GM12878 (cell line): ENCODE measurements at regions of chr2 and their contacts with region 1.

Region 1: GRCh38 chr2:112749755-112750559 is 14.5 kb downstream of the CKAP2L start:
- DNase-seq: no peak
- ATAC-seq: peak; percentile 95
- H3K4me3 ChIP-seq: no peak overlapping the region
- H3K27ac ChIP-seq: no peak overlapping the region
- H3K4me1 ChIP-seq: no peaks in the 10 kb centered on the region
- H3K27me3 ChIP-seq: no peaks in the 10 kb centered on the region
- CTCF ChIP-seq: peak; percentile 95 to 98 (median 98); a peak in 5 of 6 replicates
- EP300 ChIP-seq: no peak
- POLR2A ChIP-seq: no peak
- RAD21 ChIP-seq: peak; percentile 98

Region 2: GRCh38 chr2:112733456-112733855 is 16.5 kb before region 1 on chr2:
- CTCF ChIA-PET with region 1: interaction called, 28 read pairs
- POLR2A ChIA-PET with region 1: interaction called, 3 read pairs
- RAD21 ChIA-PET with region 1: interaction called, 8 read pairs
- SMC1A ChIA-PET with region 1: interaction called, 25 read pairs
- in situ Hi-C with region 1: no loop called
- intact Hi-C with region 1: no loop called
- DNase-seq: no peak
- ATAC-seq: no peak
- H3K4me3 ChIP-seq: no peak overlapping the region
- H3K27ac ChIP-seq: no peak overlapping the region
- H3K4me1 ChIP-seq: peaks cover under 1% of the 10 kb centered on the region; the same call in 1 of the 2 replicates
- H3K27me3 ChIP-seq: no peaks in the 10 kb centered on the region
- CTCF ChIP-seq: no peak
- EP300 ChIP-seq: no peak
- POLR2A ChIP-seq: no peak
- RAD21 ChIP-seq: no peak

Region 3: GRCh38 chr2:112784199-112785189 is 34.5 kb after region 1 on chr2 and contains the start of gene IL1A:
- CTCF ChIA-PET with region 1: interaction called, 11 read pairs
- POLR2A ChIA-PET with region 1: interaction called, 3 read pairs
- RAD21 ChIA-PET with region 1: interaction called, 36 read pairs
- SMC1A ChIA-PET with region 1: interaction called, 13 read pairs
- in situ Hi-C with region 1: no loop called
- intact Hi-C with region 1: loop called (anchors 2 kb)
- DNase-seq: no peak
- ATAC-seq: no peak
- H3K4me3 ChIP-seq: no peak within 1 kb of the TSS
- H3K27ac ChIP-seq: peak within 1 kb of the TSS; percentile 62
- H3K4me1 ChIP-seq: peaks cover 23% of the 10 kb centered on the region
- H3K27me3 ChIP-seq: no peaks in the 10 kb centered on the region
- CTCF ChIP-seq: no peak
- EP300 ChIP-seq: no peak
- POLR2A ChIP-seq: peak; percentile 70
- RAD21 ChIP-seq: no peak
- polyA plus RNA-seq, gene IL1A: 5.7 to 8.7 TPM

Region 4: GRCh38 chr2:112811841-112812306 is 61.9 kb after region 1 on chr2:
- CTCF ChIA-PET with region 1: interaction called, 8 read pairs
- POLR2A ChIA-PET with region 1: interaction called, 5 read pairs
- RAD21 ChIA-PET with region 1: interaction called, 7 read pairs
- SMC1A ChIA-PET with region 1: interaction called, 18 read pairs
- in situ Hi-C with region 1: no loop called
- intact Hi-C with region 1: no loop called
- DNase-seq: no peak
- ATAC-seq: peak; percentile 76
- H3K4me3 ChIP-seq: no peak overlapping the region
- H3K27ac ChIP-seq: peak overlapping the region; percentile 55
- H3K4me1 ChIP-seq: peaks cover 15% of the 10 kb centered on the region
- H3K27me3 ChIP-seq: no peaks in the 10 kb centered on the region
- CTCF ChIP-seq: no peak
- EP300 ChIP-seq: no peak
- POLR2A ChIP-seq: no peak
- RAD21 ChIP-seq: 0 out of 2 replicates have a peak, but pooled peaks have one; percentile 8

Region 5: DNA sequence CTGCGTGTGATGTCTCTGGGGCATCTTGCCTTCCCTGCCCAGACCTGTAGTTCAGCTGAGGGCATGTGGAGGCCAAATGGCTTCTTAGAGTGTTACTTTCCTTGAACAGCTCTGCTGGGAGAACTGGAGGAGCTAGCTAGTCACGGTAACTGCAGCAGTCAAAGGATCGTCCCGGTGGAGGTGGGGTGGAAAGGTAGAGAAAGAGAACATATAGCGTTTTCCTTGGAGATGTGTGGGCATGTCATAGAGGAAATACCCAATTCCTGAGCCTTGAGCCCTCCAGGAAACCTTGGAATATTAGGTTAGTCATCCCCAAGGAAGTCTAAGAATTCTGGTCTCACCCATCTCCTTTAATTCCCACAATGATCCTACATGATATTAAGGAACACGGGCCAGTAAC is 127.5 kb after region 1 on chr2:
- CTCF ChIA-PET with region 1: interaction called, 496 read pairs
- POLR2A ChIA-PET with region 1: interaction called, 7 read pairs
- RAD21 ChIA-PET with region 1: interaction called, 281 read pairs
- SMC1A ChIA-PET with region 1: interaction called, 362 read pairs
- in situ Hi-C with region 1: loop called (anchors 5 kb)
- intact Hi-C with region 1: no loop called
- DNase-seq: no peak
- ATAC-seq: no peak
- H3K4me3 ChIP-seq: no peak overlapping the region
- H3K27ac ChIP-seq: no peak overlapping the region
- H3K4me1 ChIP-seq: peaks cover 28% of the 10 kb centered on the region
- H3K27me3 ChIP-seq: no peaks in the 10 kb centered on the region
- CTCF ChIP-seq: no peak
- EP300 ChIP-seq: no peak
- POLR2A ChIP-seq: no peak
- RAD21 ChIP-seq: no peak

Region 6: DNA sequence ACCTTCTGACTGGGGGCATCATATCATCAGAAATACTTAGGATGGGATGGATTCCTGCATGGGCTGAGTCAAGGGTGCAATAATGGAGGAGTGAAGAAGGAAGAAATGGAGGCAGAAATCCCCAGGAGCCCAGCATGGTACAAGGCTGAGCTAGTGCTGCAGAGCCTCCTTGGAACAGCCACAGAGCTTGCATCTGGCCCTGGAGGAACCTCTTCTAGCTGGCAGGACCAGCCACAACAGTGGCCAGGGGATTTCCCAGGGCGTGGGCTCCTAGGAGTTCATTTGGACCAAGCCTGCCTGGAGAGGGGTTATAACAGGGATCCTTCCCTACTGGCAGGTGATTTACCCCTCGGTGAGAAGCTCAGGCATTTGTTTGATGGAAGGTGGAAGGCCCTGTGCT is 156.3 kb after region 1 on chr2:
- CTCF ChIA-PET with region 1: interaction called, 11 read pairs
- POLR2A ChIA-PET with region 1: interaction called, 4 read pairs
- RAD21 ChIA-PET with region 1: interaction called, 6 read pairs
- SMC1A ChIA-PET with region 1: interaction called, 13 read pairs
- in situ Hi-C with region 1: no loop called
- intact Hi-C with region 1: no loop called
- DNase-seq: no peak
- ATAC-seq: peak; percentile 32; the same call in 1 of the 3 replicates
- H3K4me3 ChIP-seq: no peak overlapping the region
- H3K27ac ChIP-seq: no peak overlapping the region
- H3K4me1 ChIP-seq: no peaks in the 10 kb centered on the region
- H3K27me3 ChIP-seq: no peaks in the 10 kb centered on the region
- CTCF ChIP-seq: no peak
- EP300 ChIP-seq: no peak
- POLR2A ChIP-seq: no peak
- RAD21 ChIP-seq: no peak

Region 7: DNA sequence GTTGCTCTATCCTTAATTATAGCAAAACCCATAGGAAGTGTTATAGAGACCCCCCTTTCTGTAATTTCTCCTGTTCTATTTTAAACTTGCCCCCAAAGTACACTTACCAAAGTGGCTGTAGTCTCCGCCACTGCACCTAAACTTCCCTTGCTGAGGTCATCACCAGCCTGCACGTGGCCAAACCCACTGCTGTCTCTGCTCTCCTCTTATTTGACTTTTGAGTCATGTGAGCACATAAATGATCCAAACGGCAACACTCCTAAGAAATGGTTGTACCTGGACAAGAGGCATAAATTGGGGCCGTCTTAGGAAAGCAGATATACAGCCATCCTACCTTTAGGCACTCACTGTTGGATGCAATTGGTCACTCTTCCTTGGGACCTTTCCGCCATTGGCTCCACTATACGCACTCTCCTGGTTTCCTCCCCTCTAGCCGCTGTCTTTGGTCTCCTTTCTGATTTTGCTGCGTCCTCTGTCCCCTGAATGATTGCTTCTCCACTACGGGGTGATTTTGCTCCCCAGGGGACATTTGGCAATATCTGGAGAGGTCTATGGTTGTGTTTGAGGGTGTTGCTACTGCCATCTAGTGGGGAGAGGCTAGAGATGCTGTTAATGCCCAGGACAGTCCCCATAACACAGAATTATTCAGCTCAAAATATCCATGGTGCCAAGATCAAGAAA is 208.6 kb after region 1 on chr2:
- CTCF ChIA-PET with region 1: interaction called, 16 read pairs
- POLR2A ChIA-PET with region 1: no interaction called
- RAD21 ChIA-PET with region 1: interaction called, 9 read pairs
- SMC1A ChIA-PET with region 1: interaction called, 7 read pairs
- in situ Hi-C with region 1: no loop called
- intact Hi-C with region 1: loop called (anchors 1 kb)
- DNase-seq: no peak
- ATAC-seq: peak; percentile 96
- H3K4me3 ChIP-seq: no peak overlapping the region
- H3K27ac ChIP-seq: no peak overlapping the region
- H3K4me1 ChIP-seq: no peaks in the 10 kb centered on the region
- H3K27me3 ChIP-seq: peaks cover 0 to 5% of the 10 kb centered on the region in 2 experiments; a peak in 3 of 4 replicates
- CTCF ChIP-seq: peak; percentile 83 to 87 (median 86)
- EP300 ChIP-seq: no peak
- POLR2A ChIP-seq: no peak
- RAD21 ChIP-seq: peak; percentile 68